Endothelial cell of umbilical vein (primary cell): ENCODE measurements at regions of chr11 and their contacts with region 1.

Region 1: DNA sequence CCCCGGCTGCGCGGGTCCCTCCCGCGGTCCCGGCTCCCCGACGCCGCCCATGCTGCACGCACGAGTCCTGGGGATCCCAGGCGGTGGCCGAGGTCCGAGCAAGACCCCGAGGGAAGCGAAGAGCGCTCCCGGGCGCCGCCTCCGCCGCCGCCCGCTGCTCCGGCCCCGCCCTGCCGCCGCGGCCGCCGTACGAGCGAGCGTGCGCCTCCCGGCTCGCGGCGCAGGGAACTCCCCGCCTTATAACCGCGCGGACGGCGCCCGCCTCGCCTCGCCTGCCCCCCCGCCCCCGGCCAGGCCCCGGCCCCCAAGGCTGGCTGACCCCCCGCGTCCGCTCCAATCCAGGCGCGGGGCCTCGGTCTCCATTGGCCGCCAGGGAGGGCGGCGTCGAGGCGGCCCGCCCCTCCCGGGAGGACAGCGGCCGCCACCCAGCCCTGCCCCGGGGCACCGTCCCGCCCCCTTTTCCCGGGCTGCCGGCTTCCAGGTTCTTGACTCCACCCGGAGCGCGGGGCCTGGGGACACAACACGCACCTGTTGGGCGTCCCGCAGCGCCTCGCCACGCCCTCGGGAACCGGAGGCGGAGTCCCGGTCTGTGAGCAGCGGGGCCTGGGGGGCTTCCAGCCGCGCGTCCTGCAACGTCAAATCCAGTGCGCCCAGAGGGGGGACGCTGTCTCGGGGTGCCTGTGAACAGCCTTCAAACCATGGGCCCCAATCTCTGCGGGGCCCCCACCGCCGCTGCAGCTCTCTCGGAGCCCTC is at the start of gene FADS3:
- DNase-seq: peak; percentile 81
- H3K4me3 ChIP-seq: peak within 1 kb of the TSS; percentile 41 to 70 (median 70)
- H3K27ac ChIP-seq: peak within 1 kb of the TSS; percentile 58
- H3K4me1 ChIP-seq: peaks cover 32% of the 10 kb centered on the region
- H3K27me3 ChIP-seq: no peaks in the 10 kb centered on the region
- CTCF ChIP-seq: no peak
- POLR2A ChIP-seq: peak; percentile 78
- total RNA-seq, gene FADS3: 204 and 216 TPM in 2 replicates

Region 2: GRCh38 chr11:61834278-61835048 is 57.0 kb before region 1 on chr11:
- CTCF ChIA-PET with region 1: no interaction called
- POLR2A ChIA-PET with region 1: no interaction called
- dilution Hi-C with region 1: no loop called
- intact Hi-C with region 1: loop called (anchors 2 kb)
- DNase-seq: peak; percentile 88
- H3K4me3 ChIP-seq: no peak overlapping the region
- H3K27ac ChIP-seq: peak overlapping the region; percentile 98
- H3K4me1 ChIP-seq: peaks cover 60% of the 10 kb centered on the region
- H3K27me3 ChIP-seq: no peaks in the 10 kb centered on the region
- CTCF ChIP-seq: no peak
- POLR2A ChIP-seq: peak; percentile 78

Region 3: DNA sequence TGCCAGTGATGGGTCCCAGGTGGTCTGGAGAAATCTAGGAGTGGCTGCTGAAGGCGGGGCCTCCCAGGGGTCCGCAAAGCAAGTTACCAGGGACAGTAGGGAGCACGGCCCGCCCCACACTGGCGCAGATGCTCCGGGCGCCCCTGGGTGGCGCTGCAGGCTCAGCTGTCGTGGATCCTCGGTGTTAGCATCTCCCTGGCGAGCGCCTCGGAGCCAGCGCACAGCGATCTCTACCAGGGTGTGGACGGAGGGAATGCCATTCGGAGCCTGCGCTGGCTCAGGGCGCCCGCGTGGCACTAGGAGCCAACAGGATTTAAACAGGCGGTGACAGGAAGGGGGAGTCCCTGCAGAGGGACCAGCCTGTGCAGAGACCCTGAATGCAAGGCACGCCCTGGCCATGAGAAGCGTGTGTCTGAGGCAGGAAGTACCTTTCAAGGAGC is 20.3 kb before region 1 on chr11:
- CTCF ChIA-PET with region 1: interaction called, 127 read pairs
- POLR2A ChIA-PET with region 1: no interaction called
- dilution Hi-C with region 1: no loop called
- intact Hi-C with region 1: loop called (anchors 1 kb)
- DNase-seq: peak; percentile 76
- H3K4me3 ChIP-seq: no peak overlapping the region
- H3K27ac ChIP-seq: no peak overlapping the region
- H3K4me1 ChIP-seq: peaks cover 12% of the 10 kb centered on the region
- H3K27me3 ChIP-seq: no peaks in the 10 kb centered on the region
- CTCF ChIP-seq: peak; percentile 95 to 99
- POLR2A ChIP-seq: no peak